ENCODE measurements at regions of chr5 and their contacts with region 1.

Region 1: DNA sequence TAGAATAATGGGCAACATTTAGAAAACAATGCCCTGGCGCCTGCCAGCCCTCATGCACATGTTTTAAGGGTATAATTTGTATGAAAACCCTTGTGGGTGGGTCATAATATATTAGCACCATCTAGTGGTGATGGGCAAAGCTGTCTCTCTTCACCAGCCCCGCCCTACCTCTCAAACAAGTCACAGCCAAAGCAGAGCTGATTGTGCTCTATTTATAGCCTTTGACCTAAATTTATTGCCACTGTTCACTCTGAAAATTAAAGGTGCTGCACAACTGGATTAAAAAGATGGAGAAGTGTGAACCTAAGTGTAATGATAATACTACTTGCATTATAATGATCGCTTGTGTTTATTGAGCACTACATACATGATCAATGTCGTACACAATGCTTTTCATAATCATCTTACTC is 131.9 kb upstream of the ANKH start:
- DNase-seq: peak; percentile 74
- H3K4me3 ChIP-seq: no peak overlapping the region
- H3K27ac ChIP-seq: no peak overlapping the region
- H3K4me1 ChIP-seq: no peaks in the 10 kb centered on the region
- H3K27me3 ChIP-seq: no peaks in the 10 kb centered on the region
- CTCF ChIP-seq: peak; percentile 64 to 76 (median 69)
- POLR2A ChIP-seq: no peak

Region 2: GRCh38 chr5:14730881-14731280 is 272.6 kb before region 1 on chr5:
- intact Hi-C with region 1: loop called (anchors 5 kb)
- DNase-seq: no peak
- H3K4me3 ChIP-seq: no peak overlapping the region
- H3K27ac ChIP-seq: no peak overlapping the region
- H3K4me1 ChIP-seq: peaks cover 9% of the 10 kb centered on the region
- H3K27me3 ChIP-seq: no peaks in the 10 kb centered on the region
- CTCF ChIP-seq: no peak
- POLR2A ChIP-seq: no peak

Region 3: GRCh38 chr5:14809369-14810155 is 194.0 kb before region 1 on chr5:
- intact Hi-C with region 1: no loop called
- DNase-seq: peak; percentile 42
- H3K4me3 ChIP-seq: no peak overlapping the region
- H3K27ac ChIP-seq: no peak overlapping the region
- H3K4me1 ChIP-seq: no peaks in the 10 kb centered on the region
- H3K27me3 ChIP-seq: no peaks in the 10 kb centered on the region
- CTCF ChIP-seq: no peak
- POLR2A ChIP-seq: no peak